Activated CD4-positive, alpha-beta memory T cell treated with anti-CD3 and anti-CD28 coated beads for 36 hours (primary cell): ENCODE measurements at regions of chr7 and their contacts with region 1.

Region 1: GRCh38 chr7:24819916-24820689 is 62.8 kb upstream of the GSDME start:
- DNase-seq: peak; percentile 84
- H3K4me3 Mint-ChIP-seq: peak overlapping the region; percentile 62
- H3K27ac Mint-ChIP-seq: peak overlapping the region; percentile 95
- H3K4me1 Mint-ChIP-seq: peaks cover 33% of the 10 kb centered on the region
- H3K27me3 Mint-ChIP-seq: no peaks in the 10 kb centered on the region

Region 2: DNA sequence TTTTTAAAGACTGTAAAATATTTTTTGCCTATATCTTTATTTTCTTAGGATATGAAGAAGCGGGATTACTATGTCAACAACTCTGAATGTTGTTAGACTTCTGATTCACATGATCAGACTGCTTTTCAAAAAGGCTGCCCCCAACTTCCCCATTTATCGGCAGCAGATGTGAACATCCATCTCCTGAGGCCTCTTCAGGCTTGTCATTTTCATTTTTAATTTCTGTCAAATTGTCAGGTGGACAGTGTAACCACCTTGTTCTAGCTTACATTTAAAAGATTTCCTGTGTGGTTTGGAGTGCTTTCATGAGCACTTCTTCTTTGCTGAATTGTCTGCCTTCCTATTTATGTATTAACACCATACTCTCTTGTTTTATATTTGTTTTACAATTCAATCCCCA is 16.0 kb after region 1 on chr7:
- CTCF ChIA-PET with region 1: interaction called, 14 read pairs
- POLR2A ChIA-PET with region 1: no interaction called
- intact Hi-C with region 1: no loop called
- DNase-seq: no peak
- H3K4me3 Mint-ChIP-seq: no peak overlapping the region
- H3K27ac Mint-ChIP-seq: no peak overlapping the region
- H3K4me1 Mint-ChIP-seq: peaks cover 36% of the 10 kb centered on the region
- H3K27me3 Mint-ChIP-seq: no peaks in the 10 kb centered on the region

Region 3: GRCh38 chr7:24882989-24883621 is 63.0 kb after region 1 on chr7:
- CTCF ChIA-PET with region 1: interaction called, 12 read pairs
- POLR2A ChIA-PET with region 1: interaction called, 6 read pairs
- intact Hi-C with region 1: loop called (anchors 1 kb)
- DNase-seq: peak; percentile 75
- H3K4me3 Mint-ChIP-seq: no peak overlapping the region
- H3K27ac Mint-ChIP-seq: peak overlapping the region; percentile 57
- H3K4me1 Mint-ChIP-seq: peaks cover 78% of the 10 kb centered on the region
- H3K27me3 Mint-ChIP-seq: no peaks in the 10 kb centered on the region

Region 4: GRCh38 chr7:24922099-24922773 is 102.1 kb after region 1 on chr7:
- CTCF ChIA-PET with region 1: interaction called, 5 read pairs
- POLR2A ChIA-PET with region 1: interaction called, 3 read pairs
- intact Hi-C with region 1: loop called (anchors 1 kb)
- DNase-seq: no peak
- H3K4me3 Mint-ChIP-seq: no peak overlapping the region
- H3K27ac Mint-ChIP-seq: peak overlapping the region; percentile 85
- H3K4me1 Mint-ChIP-seq: peaks cover 86% of the 10 kb centered on the region
- H3K27me3 Mint-ChIP-seq: no peaks in the 10 kb centered on the region

Region 5: DNA sequence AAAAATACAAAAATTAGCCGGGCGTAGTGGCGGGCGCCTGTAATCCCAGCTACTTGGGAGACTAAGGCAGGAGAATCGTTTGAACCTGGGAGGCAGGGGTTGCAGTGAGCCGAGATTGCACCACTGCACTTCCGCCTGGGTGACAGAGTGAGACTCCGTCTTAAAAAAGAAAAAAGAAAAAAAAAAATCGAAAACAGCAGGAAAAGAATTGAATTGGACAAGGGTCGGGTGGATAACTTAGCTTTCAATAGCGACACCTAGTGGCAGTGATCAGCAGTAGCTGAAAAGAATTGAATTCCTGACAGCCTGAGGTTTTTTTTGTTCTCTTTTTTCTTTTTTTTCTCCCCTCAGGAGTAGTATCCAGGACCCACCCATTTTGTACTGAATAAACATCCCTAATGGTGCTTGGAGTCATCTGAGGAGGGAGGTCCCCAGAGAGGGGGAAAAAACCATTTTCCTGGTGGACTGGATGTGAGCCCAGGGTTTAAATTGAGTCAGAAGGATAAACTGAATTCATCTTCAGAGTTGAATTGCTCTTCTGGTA is 249.9 kb after region 1 on chr7:
- CTCF ChIA-PET with region 1: interaction called, 50 read pairs
- POLR2A ChIA-PET with region 1: no interaction called
- intact Hi-C with region 1: loop called (anchors 1 kb)
- DNase-seq: peak; percentile 45
- H3K4me3 Mint-ChIP-seq: no peak overlapping the region
- H3K27ac Mint-ChIP-seq: no peak overlapping the region
- H3K4me1 Mint-ChIP-seq: peaks cover 26% of the 10 kb centered on the region
- H3K27me3 Mint-ChIP-seq: no peaks in the 10 kb centered on the region

Region 6: DNA sequence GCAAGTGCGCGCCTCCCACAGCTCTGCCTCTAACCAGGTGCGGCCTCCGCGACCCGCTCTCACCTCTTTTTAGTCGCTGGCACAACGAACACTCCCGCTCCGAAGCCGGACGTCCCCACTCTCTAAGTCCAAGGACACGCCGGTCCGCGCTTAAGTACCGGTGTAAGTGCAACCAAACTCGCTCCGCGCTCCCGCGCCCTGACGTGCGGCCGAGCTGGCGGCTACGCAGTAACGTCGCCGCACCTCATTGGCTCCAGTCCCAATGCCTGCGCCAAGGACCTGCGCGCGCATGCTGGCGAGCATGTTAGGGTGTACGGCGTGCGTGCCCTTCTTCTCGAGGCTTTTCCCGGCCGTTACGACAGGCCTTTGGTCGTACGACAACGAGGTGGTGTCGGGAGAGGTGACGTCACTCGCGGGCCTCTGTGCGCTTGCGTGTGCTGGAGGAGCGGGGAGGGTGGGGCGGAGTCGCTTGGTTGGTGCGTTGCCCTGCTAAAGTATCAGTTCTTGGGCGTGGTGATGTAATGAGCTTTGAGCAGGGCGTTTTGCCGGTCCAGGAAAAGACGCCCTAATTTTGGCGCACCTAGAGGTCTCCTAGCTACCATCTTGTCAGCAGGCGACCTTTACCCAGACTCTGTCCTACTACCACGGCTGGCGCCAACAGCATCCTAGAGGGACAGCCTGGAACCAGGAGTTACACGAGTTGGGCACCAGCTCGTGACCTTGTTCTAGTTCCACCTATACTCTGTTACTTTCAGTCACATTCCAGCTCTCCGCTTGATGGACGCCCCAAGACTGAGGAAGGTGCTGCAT is 305.2 kb after region 1 on chr7 and contains the start of gene CYCS:
- CTCF ChIA-PET with region 1: interaction called, 5 read pairs
- POLR2A ChIA-PET with region 1: no interaction called
- intact Hi-C with region 1: loop called (anchors 1 kb)
- DNase-seq: peak; percentile 100
- H3K4me3 Mint-ChIP-seq: peak within 1 kb of the TSS; percentile 100
- H3K27ac Mint-ChIP-seq: peak within 1 kb of the TSS; percentile 100
- H3K4me1 Mint-ChIP-seq: peaks cover 24% of the 10 kb centered on the region
- H3K27me3 Mint-ChIP-seq: no peaks in the 10 kb centered on the region
- total RNA-seq, gene CYCS: 199 to 207 TPM